Activated naive CD8-positive, alpha-beta T cell treated with anti-CD3 and anti-CD28 coated beads, Interleukin-2, amount 10 ng/mL, durations not matched to agents 7 days and 5 days (primary cell): ENCODE measurements at regions of chr1 and their contacts with region 1.

Region 1: GRCh38 chr1:2227346-2228153 is 569 bp upstream of the SKI start:
- DNase-seq: peak; percentile 99
- ATAC-seq: peak; percentile 86
- H3K4me3 Mint-ChIP-seq: peak overlapping the region; percentile 66
- H3K27ac Mint-ChIP-seq: peak overlapping the region; percentile 65
- H3K4me1 Mint-ChIP-seq: peaks cover 15% of the 10 kb centered on the region
- H3K27me3 Mint-ChIP-seq: peaks cover 11% of the 10 kb centered on the region

Region 2: DNA sequence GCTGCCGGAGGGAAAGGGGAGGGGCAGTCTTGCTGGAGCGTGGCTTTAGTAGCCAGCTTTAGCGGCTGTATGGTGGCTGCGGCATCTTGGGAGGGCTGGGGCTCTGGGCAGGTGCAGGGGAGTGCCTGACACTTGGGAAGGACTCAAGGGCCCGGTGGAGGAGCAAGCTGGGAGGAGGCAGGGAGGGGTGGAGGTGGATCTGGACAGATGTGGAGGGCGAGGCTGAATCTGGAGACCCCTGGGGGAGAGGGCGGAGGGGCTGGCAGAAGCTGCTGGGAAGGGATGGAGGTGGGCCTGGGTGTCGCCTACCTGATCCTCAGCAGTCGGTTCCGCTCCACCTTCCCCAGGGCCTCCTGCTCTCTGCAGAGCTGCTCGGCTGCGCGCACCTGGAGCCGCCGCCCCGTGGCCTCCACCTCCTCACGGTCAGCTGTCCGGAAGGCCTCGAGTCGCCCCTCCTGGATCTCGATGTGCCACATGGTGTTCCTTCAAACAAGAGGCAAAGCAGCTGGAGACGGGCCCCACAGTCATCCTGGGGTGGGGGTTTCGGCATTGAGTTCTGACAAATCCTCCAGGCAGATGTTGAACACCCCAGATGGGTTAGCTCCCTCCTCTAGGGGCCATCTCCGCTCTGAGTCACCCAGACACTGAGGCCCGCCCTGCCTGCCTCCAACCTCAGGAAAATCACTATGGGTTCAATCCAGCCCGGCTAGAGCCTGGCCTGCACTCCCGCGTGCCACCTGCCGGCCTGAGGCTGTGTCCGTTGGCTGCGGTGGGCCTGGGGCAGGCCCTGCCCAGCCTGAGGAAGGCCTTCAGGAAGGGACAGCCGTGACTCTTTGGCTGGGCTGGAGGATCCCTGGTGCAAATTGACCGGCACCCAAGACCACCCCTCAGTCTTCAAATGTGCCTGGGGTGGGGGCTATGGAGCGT is 253.6 kb before region 1 on chr1:
- POLR2A ChIA-PET with region 1: no interaction called
- DNase-seq: no peak
- ATAC-seq: no peak
- H3K4me3 Mint-ChIP-seq: no peak overlapping the region
- H3K27ac Mint-ChIP-seq: no peak overlapping the region
- H3K4me1 Mint-ChIP-seq: no peaks in the 10 kb centered on the region
- H3K27me3 Mint-ChIP-seq: no peaks in the 10 kb centered on the region

Region 3: DNA sequence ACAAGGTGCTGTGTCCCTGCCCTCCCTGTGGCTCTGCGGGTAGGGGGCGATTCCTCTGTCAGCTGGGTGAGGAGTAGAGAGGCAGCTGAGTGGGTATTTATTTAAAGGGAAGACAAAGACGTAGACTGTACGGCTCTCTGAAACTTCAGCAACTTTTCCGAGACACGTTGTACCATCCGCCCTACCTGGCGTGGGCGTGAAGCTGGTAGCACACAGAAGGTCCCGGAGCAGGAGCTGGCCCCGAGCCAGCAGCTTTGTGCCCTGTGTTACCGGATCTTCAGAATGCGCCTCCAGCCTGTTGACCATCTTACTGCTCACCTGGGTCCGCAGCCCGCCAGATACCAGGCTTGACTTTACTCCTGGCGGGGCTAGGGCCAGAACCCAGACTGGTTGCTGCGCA is 142.5 kb before region 1 on chr1:
- POLR2A ChIA-PET with region 1: no interaction called
- DNase-seq: no peak
- ATAC-seq: no peak
- H3K4me3 Mint-ChIP-seq: no peak overlapping the region
- H3K27ac Mint-ChIP-seq: no peak overlapping the region
- H3K4me1 Mint-ChIP-seq: no peaks in the 10 kb centered on the region
- H3K27me3 Mint-ChIP-seq: no peaks in the 10 kb centered on the region

Region 4: GRCh38 chr1:2108213-2108876 is 119.2 kb before region 1 on chr1:
- POLR2A ChIA-PET with region 1: no interaction called
- DNase-seq: no peak
- ATAC-seq: no peak
- H3K4me3 Mint-ChIP-seq: no peak overlapping the region
- H3K27ac Mint-ChIP-seq: no peak overlapping the region
- H3K4me1 Mint-ChIP-seq: peaks cover 2% of the 10 kb centered on the region
- H3K27me3 Mint-ChIP-seq: no peaks in the 10 kb centered on the region

Region 5: GRCh38 chr1:2126331-2127186 is 101.0 kb before region 1 on chr1:
- POLR2A ChIA-PET with region 1: no interaction called
- DNase-seq: no peak
- ATAC-seq: peak; percentile 53
- H3K4me3 Mint-ChIP-seq: peak overlapping the region; percentile 69
- H3K27ac Mint-ChIP-seq: peak overlapping the region; percentile 78
- H3K4me1 Mint-ChIP-seq: peaks cover 6% of the 10 kb centered on the region
- H3K27me3 Mint-ChIP-seq: no peaks in the 10 kb centered on the region

Region 6: DNA sequence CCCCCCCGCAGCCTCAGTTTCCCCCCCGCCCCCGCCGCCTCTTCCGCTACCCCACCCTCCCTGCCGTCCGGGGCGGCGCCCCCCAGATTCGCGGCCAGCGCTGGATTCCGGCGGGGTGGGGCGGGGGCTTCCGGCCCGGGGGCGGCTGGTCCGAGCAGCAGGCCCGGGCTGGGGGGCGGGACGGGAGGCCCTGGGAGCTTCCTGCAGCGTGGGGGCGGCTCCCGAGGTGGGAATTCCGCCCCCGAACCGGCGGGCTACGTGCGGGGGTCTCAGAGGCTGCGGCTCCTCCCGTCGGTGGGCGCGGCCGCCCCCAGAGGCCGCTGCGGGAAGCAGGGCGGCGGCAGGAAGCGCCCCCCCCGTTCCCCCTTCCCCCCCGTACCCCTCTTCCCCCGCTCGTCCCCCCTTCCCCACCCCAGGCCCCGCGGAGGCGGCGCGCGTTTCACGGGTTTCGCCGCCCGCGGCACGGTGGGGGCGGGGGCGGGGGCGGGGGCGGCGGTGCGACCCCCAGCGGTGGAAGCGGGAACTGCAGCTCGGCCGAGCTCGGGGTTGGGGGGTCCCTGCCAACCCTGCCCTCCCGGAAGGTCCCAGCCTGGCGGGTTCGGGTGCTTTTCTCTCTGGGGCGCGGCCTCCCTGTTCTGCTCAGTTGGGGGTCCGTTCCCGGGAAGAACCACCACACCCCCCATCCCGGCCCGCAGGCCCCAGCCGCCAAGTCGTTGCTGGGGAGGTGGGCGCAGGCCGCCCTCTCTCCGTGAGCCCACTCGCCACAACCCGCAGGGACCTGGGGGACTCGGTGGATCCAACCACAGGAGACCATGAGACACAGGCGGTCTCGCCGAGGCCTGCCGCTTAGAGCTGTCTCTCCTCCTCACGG is 87.5 kb after region 1 on chr1:
- POLR2A ChIA-PET with region 1: interaction called, 10 read pairs
- DNase-seq: peak; percentile 82
- ATAC-seq: peak; percentile 46
- H3K4me3 Mint-ChIP-seq: peak overlapping the region; percentile 68
- H3K27ac Mint-ChIP-seq: peak overlapping the region; percentile 74
- H3K4me1 Mint-ChIP-seq: peaks cover 2% of the 10 kb centered on the region
- H3K27me3 Mint-ChIP-seq: no peaks in the 10 kb centered on the region

Region 7: DNA sequence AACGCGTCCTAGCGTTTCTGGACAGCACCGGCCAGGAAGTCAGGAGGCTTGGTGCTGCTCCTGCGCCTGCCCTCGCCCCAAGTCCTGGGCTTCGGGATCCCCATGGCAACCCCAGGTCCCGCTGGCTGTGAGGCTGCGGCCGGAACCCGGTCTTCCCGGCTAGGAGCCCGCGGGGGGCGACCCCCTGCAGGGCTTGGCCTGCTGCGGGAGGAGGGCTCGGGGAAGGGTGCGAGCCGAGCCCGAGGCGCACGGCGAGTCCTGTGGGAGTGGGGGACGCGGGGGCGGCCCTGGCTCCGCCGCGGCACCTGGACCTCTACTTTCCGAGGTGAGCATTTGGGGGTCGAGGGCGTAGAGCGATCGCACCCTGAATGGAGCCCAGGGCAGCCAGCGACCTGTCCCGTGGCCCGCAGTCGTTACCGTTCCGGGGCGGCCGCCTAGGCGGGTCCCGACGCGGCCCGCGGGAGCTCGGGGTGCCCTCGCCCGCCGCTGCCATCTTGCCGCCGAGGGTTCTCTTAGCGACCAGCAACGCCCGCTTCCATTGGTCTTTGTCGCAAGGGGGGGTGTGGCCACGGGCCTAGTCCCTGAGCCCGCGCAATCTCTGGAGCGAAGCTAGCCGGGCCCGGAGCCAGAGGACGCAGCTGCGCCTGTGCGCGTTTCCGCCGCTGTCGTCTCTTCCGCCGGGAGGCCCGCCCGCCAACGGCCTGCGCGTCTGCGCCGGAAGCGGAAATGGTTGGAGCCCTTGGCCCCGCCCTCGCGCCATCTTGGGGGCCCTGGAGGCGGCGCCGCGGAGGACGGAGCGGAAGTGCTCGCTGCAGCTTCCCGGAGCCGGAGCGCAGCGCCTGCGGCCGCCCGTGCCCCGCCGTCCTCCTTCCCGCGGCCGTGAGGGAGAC is 163.7 kb after region 1 on chr1 and contains the starts of genes MORN1 and RER1:
- POLR2A ChIA-PET with region 1: interaction called, 10 read pairs
- DNase-seq: peak; percentile 99
- ATAC-seq: peak; percentile 99
- H3K4me3 Mint-ChIP-seq: peak within 1 kb of the TSS; percentile 91
- H3K27ac Mint-ChIP-seq: peak within 1 kb of the TSS; percentile 86
- H3K4me1 Mint-ChIP-seq: peaks cover 22% of the 10 kb centered on the region
- H3K27me3 Mint-ChIP-seq: no peaks in the 10 kb centered on the region
- total RNA-seq, gene MORN1: 10.5 to 11.6 TPM
- total RNA-seq, gene RER1: 140 to 147 TPM